ENCODE measurements at regions of chr2 and their contacts with region 1.

Region 1: DNA sequence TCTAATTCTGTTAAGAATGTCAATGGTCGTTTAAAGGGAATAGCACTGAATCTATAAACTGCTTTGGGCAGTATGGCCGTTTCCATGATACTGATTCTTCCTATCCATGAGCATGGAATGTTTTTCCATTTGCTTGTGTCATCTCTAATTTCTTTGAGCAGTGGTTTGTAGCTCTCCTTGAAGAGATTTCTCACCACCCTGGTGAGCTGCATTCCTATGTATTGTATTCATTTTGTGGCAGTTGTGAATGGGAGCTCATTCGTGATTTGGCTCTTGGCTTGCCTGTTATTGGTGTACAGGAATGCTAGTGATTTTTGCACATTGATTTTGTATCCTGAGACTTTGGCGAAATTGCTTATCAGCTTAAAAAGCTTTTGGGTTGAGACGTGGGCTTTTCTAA is 38.3 kb upstream of the WDR75 start:
- DNase-seq: peak; percentile 66
- H3K4me3 ChIP-seq: no peak overlapping the region
- H3K27ac ChIP-seq: no peak overlapping the region
- H3K4me1 ChIP-seq: peaks cover 11% of the 10 kb centered on the region
- H3K27me3 ChIP-seq: no peaks in the 10 kb centered on the region
- CTCF ChIP-seq: no peak

Region 2: DNA sequence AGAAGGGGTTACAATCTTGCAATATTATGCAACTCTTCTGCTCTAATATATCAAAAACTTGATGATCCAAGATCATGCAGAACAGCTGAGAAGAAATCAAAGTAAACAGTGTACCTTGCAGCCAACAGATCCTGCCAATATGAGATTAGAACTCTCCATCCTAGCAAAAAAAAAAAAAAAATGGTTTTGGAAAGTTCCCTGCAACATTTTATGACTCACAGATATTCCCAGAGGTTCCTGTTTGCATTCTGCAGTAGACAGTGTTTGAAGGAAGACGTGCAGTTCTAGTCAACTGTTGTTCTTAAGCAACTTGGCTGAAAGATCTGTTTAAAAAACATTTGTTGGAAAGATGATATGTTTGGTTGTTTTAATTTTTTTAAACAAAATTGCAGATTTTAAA is 65.3 kb before region 1 on chr2:
- CTCF ChIA-PET with region 1: no interaction called
- dilution Hi-C with region 1: no loop called
- in situ Hi-C with region 1: no loop called
- intact Hi-C with region 1: no loop called
- DNase-seq: no peak
- H3K4me3 ChIP-seq: no peak overlapping the region
- H3K27ac ChIP-seq: no peak overlapping the region
- H3K4me1 ChIP-seq: no peaks in the 10 kb centered on the region
- H3K27me3 ChIP-seq: no peaks in the 10 kb centered on the region
- CTCF ChIP-seq: no peak

Region 3: GRCh38 chr2:189363559-189363958 is 39.4 kb before region 1 on chr2:
- CTCF ChIA-PET with region 1: no interaction called
- dilution Hi-C with region 1: no loop called
- in situ Hi-C with region 1: no loop called
- intact Hi-C with region 1: loop called (anchors 5 kb)
- DNase-seq: peak; percentile 62
- H3K4me3 ChIP-seq: no peak overlapping the region
- H3K27ac ChIP-seq: peak overlapping the region; percentile 11
- H3K4me1 ChIP-seq: peaks cover 19% of the 10 kb centered on the region
- H3K27me3 ChIP-seq: no peaks in the 10 kb centered on the region
- CTCF ChIP-seq: no peak

Region 4: DNA sequence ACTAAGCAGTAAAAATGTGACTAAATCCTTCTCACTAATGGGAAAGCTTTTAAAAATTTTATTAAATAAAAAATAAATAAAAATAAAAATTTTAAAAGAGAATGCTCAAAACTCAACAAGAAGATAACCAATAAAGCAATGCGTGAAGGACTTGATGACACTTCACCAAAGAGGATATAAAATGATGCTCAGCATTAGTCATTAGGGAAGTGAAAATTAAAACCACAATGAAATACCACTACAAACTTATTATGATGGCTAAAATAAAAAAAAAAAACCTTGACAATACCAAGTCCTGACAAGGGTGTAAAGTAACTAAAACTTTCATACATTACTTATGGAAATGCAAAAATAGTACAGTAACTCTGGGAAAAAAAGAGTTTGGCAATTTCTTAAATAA is 35.0 kb after region 1 on chr2:
- CTCF ChIA-PET with region 1: no interaction called
- dilution Hi-C with region 1: no loop called
- in situ Hi-C with region 1: no loop called
- intact Hi-C with region 1: loop called (anchors 2 kb)
- DNase-seq: no peak
- H3K4me3 ChIP-seq: no peak overlapping the region
- H3K27ac ChIP-seq: no peak overlapping the region
- H3K4me1 ChIP-seq: peaks cover 10% of the 10 kb centered on the region
- H3K27me3 ChIP-seq: no peaks in the 10 kb centered on the region
- CTCF ChIP-seq: no peak